ENCODE measurements at regions of chr9 and their contacts with region 1.

Region 1: GRCh38 chr9:5593904-5594303 is 35.0 kb upstream of the RIC1 start:
- DNase-seq: no peak
- ATAC-seq: no peak
- H3K4me3 Mint-ChIP-seq: no peak overlapping the region
- H3K27ac Mint-ChIP-seq: no peak overlapping the region
- H3K4me1 Mint-ChIP-seq: peaks cover 19% of the 10 kb centered on the region
- H3K27me3 Mint-ChIP-seq: peaks cover 2% of the 10 kb centered on the region

Region 2: DNA sequence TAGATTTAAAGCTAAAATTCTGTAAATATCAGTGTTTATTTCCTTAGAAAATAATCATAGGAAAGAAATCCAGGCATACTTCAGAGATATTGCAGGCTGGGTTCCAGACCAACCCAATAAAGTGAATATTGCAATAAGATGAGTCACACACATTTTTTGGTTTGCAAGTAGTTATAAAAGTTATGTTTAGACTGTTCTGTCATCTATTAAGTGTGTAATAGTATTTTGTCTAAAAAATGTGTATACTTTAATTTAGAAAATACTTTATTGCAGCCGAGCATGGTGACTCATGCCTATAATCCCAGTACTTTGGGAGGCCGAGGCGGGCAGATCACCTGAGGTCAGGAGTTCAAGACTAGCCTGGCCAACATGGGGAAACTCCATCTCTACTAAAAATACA is 28.1 kb after region 1 on chr9:
- CTCF ChIA-PET with region 1: interaction called, 15 read pairs
- DNase-seq: no peak
- ATAC-seq: no peak
- H3K4me3 Mint-ChIP-seq: no peak overlapping the region
- H3K27ac Mint-ChIP-seq: no peak overlapping the region
- H3K4me1 Mint-ChIP-seq: peaks cover 38% of the 10 kb centered on the region
- H3K27me3 Mint-ChIP-seq: no peaks in the 10 kb centered on the region

Region 3: DNA sequence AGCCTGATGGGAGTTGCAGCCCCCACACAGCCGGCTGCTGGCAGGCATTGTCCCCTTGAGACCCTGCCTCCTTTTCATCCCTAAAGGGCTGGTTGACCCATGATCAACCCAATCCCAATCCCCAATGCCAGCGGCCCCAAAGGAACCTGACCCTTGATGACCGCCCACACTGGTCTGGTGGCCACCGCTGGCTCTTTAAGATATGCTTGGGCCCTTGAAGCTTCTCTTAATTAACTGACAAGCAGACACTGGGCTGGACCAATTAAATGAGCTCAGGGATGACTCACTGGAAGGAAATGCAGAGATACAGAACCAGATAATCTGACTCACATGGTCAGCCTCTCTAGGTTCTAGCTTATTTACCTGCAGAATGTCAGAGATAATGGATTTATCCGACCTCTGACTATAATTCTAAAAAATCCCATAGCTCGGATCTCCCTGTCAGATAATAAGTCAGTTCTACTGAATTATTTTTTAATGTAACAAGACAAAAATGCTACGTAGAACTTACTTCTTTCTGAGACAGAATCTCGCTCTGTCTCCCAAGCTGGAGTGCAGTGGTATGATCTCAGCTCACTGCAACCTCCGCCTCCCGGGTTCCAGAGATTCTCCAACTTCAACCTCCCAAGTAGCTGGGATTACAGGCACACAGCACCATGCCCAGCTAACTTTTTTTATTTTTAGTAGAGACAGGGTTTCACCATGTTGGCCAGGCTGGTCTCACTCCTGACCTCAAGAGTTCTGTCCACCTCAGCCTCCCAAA is 285.7 kb after region 1 on chr9:
- CTCF ChIA-PET with region 1: no interaction called
- DNase-seq: no peak
- ATAC-seq: peak; percentile 84
- H3K4me3 Mint-ChIP-seq: no peak overlapping the region
- H3K27ac Mint-ChIP-seq: no peak overlapping the region
- H3K4me1 Mint-ChIP-seq: peaks cover 24% of the 10 kb centered on the region
- H3K27me3 Mint-ChIP-seq: no peaks in the 10 kb centered on the region

Measured in activated CD8-positive, alpha-beta memory T cell treated with anti-CD3 and anti-CD28 coated beads, Interleukin-2, amount 10 ng/mL, durations not matched to agents 7 days and 5 days (primary cell).